MCF 10A (cell line): ENCODE measurements at regions of chr6 and their contacts with region 1.

Region 1: GRCh38 chr6:133817460-133818047 is 71.4 kb upstream of the TCF21 start:
- DNase-seq: no peak
- H3K4me3 Mint-ChIP-seq: no peak overlapping the region
- H3K27ac Mint-ChIP-seq: no peak overlapping the region
- H3K4me1 Mint-ChIP-seq: peaks cover 14% of the 10 kb centered on the region
- H3K27me3 Mint-ChIP-seq: no peaks in the 10 kb centered on the region
- CTCF ChIP-seq: peak; percentile 31

Region 2: GRCh38 chr6:133741375-133741861 is 76.1 kb before region 1 on chr6:
- CTCF ChIA-PET with region 1: no interaction called
- POLR2A ChIA-PET with region 1: interaction called, 3 read pairs
- intact Hi-C with region 1: loop called (anchors 10 kb)
- DNase-seq: peak; percentile 93
- H3K4me3 Mint-ChIP-seq: no peak overlapping the region
- H3K27ac Mint-ChIP-seq: peak overlapping the region; percentile 57
- H3K4me1 Mint-ChIP-seq: peaks cover 13% of the 10 kb centered on the region
- H3K27me3 Mint-ChIP-seq: no peaks in the 10 kb centered on the region
- CTCF ChIP-seq: no peak

Region 3: DNA sequence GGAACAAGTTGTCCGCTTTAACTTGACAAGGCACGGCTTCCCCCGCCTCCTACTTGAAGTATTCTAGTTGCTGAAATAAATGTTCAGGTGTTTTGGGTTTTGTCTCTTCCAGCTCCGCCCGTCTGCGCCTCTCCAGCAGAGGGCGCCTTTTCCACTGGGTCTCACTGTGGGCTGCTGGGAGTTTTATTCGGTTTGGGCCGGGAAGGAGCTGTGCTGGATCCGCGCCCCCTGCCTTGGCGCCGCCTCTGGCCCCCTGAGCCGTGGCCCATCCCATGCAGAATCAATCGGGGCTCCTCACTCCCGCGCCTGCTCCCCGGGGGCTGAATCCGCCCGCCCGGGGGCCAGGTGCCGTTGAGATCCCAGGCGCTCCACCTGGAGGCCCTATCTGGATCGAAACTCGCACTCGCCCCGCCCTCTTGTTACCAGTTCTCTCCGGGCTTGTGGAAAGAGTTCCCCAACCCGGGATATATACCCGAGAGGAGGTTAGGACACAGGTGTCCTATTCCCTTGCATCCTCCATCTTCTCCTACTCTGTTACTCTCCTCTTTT is 20.3 kb after region 1 on chr6:
- CTCF ChIA-PET with region 1: interaction called, 11 read pairs
- POLR2A ChIA-PET with region 1: no interaction called
- intact Hi-C with region 1: no loop called
- DNase-seq: peak; percentile 50
- H3K4me3 Mint-ChIP-seq: peak overlapping the region; percentile 55
- H3K27ac Mint-ChIP-seq: no peak overlapping the region
- H3K4me1 Mint-ChIP-seq: peaks cover 6% of the 10 kb centered on the region
- H3K27me3 Mint-ChIP-seq: no peaks in the 10 kb centered on the region
- CTCF ChIP-seq: peak; percentile 47